ENCODE measurements at regions of chr7 and their contacts with region 1.

Region 1: GRCh38 chr7:92898798-92899197 is 62.4 kb upstream of the CDK6 start:
- DNase-seq: no peak
- ATAC-seq: no peak
- H3K4me3 ChIP-seq: no peak overlapping the region
- H3K27ac ChIP-seq: no peak overlapping the region
- H3K4me1 ChIP-seq: peaks cover 8% of the 10 kb centered on the region
- H3K27me3 ChIP-seq: no peaks in the 10 kb centered on the region
- CTCF ChIP-seq: no peak
- EP300 ChIP-seq: no peak
- POLR2A ChIP-seq: no peak
- RAD21 ChIP-seq: no peak

Region 2: GRCh38 chr7:92868683-92869293 is 30.0 kb before region 1 on chr7:
- CTCF ChIA-PET with region 1: no interaction called
- POLR2A ChIA-PET with region 1: no interaction called
- in situ Hi-C with region 1: no loop called
- intact Hi-C with region 1: no loop called
- DNase-seq: no peak
- ATAC-seq: no peak
- H3K4me3 ChIP-seq: no peak overlapping the region
- H3K27ac ChIP-seq: no peak overlapping the region
- H3K4me1 ChIP-seq: no peaks in the 10 kb centered on the region
- H3K27me3 ChIP-seq: no peaks in the 10 kb centered on the region
- CTCF ChIP-seq: no peak
- EP300 ChIP-seq: no peak
- POLR2A ChIP-seq: no peak
- RAD21 ChIP-seq: no peak

Region 3: DNA sequence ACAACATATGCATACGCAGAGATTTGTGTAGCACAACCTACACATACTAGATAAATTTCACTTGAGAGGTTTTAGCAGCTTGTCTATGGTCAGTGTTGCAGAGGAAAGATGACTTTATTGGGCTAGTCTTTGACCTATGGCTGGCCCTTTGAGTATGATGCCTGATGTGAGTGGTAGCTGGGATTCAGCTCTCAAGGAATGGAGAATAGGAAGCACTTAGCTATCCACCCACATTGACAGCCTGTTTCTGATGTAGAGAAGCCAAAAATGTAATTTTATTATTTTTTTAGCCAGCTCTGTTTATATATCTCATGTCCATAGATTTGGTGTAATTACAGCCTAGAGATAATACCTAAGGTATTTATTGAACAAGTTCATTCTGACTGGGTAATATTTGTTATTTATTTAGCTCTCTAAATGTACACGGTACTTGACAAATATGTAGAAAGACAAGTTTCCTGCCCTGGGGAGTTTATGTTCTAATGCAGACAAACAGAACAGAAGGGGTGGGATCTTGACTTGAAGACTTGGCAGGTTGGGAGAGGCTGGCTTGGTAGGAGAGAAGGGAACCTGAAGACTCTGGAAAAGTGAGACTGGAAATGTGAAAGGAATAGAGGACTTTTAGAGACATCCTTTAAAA is 35.1 kb after region 1 on chr7:
- CTCF ChIA-PET with region 1: no interaction called
- POLR2A ChIA-PET with region 1: no interaction called
- in situ Hi-C with region 1: no loop called
- intact Hi-C with region 1: loop called (anchors 5 kb)
- DNase-seq: no peak
- ATAC-seq: no peak
- H3K4me3 ChIP-seq: no peak overlapping the region
- H3K27ac ChIP-seq: no peak overlapping the region
- H3K4me1 ChIP-seq: no peaks in the 10 kb centered on the region
- H3K27me3 ChIP-seq: peaks cover 0 to 3% of the 10 kb centered on the region in 2 experiments; a peak in 1 of 5 replicates
- CTCF ChIP-seq: no peak
- EP300 ChIP-seq: no peak
- POLR2A ChIP-seq: no peak
- RAD21 ChIP-seq: no peak